ENCODE measurements at regions of chr9 and their contacts with region 1.

Region 1: DNA sequence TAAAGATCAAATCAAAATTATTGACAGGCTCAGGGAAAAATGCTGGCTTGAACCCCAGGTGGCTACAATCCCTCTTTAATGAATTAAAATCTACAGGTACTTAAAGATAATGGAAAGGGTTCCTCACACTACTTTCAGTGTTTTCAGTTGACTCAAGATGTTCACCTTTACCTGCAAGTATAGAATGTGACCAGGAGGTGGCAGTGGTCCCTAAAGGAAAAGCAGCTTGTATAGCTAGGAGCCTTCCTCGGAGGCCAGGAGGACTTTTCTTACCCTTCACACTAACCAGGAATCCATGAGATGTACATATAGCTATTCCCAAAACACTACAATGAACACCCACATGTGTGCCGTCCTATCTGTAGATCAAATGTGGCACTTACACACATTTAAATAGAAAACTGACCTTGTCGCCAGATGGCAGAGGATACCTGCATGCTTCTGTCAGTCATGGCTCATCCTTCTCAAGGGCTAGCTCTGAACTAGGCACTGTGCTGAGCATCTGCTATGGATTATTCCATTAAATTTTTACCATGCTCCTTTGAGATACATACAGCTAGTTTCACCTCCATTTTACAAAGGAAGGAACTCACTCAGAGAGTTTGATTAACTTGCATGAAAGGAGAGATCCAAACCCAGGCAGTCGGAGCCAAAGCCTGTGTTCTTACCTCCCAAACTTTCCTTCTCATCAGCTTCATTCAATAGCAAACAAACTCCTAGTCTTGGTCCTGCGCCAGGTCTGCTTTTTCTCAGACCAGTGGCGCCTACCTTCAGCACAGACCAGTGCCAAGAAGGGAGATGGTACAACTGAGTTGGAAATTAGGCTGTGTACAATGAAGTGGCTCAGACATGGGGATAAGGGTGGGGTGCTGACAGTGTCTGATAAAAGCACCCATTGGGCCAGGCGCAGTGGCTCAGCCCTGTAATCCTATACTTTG is 24.5 kb downstream of the C9orf152 start:
- DNase-seq: peak; percentile 44
- H3K4me3 ChIP-seq: no peak overlapping the region
- H3K27ac ChIP-seq: no peak overlapping the region
- H3K27me3 ChIP-seq: no peaks in the 10 kb centered on the region
- CTCF ChIP-seq: peak; percentile 78

Region 2: DNA sequence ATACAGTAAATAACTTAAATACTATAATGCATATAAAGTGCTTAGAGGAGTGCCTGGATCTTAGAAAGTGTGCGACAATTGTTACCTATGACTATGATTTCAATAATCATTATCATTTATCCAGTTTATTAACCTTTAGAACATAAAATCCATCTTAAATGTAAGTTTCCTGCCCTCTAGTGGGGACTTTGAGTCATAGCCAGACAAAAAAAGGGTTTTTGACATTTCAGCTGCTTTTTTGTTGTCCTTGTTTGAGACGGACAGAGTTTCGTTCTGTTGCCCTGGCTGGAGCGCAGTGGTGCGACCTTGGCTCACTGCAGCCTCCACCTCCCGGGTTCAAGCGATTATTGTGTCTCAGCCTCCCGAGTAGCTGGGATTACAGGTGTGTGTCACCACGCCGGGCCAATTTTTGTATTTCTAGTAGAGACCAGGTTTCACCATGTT is 34.2 kb after region 1 on chr9:
- CTCF ChIA-PET with region 1: interaction called, 116 read pairs
- POLR2A ChIA-PET with region 1: no interaction called
- DNase-seq: peak; percentile 8
- H3K4me3 ChIP-seq: no peak overlapping the region
- H3K27ac ChIP-seq: no peak overlapping the region
- H3K27me3 ChIP-seq: peaks cover 7% of the 10 kb centered on the region
- CTCF ChIP-seq: peak; percentile 69

Region 3: DNA sequence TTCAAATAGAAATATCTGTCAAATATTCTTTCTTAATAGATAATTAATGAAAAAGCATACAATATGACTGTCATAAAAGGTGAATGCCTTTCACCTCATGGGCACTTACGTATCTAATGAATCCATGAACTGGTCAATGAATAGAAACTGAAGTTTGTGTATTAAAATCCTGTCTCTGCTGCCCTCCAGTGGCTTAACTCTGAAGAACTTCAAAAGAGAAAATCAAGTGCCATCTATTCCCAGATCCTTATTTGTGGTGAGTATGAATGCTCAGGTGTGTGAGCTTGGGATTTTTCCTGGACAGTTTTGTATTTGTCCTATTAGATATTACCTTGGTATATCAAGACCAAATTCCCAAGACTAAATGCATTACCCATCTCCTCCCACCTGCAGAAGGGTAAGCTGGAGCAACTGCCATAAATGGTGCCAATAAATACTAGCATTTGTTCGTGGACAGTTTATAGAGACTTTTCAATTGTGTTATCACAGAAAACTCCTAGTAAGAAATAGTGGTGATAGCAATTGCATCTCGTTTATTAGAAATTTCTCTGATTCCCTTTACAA is 440.1 kb after region 1 on chr9:
- CTCF ChIA-PET with region 1: interaction called, 14 read pairs
- POLR2A ChIA-PET with region 1: no interaction called
- DNase-seq: no peak
- H3K4me3 ChIP-seq: no peak overlapping the region
- H3K27ac ChIP-seq: no peak overlapping the region
- H3K27me3 ChIP-seq: no peaks in the 10 kb centered on the region
- CTCF ChIP-seq: peak; percentile 68

Measured in AG04450 (cell line).